GM13976 (cell line): ENCODE measurements at regions of chr11 and their contacts with region 1.

Region 1: GRCh38 chr11:9527481-9528140 is 45.9 kb upstream of the WEE1 start:
- DNase-seq: no peak
- CTCF ChIP-seq: no peak

Region 2: GRCh38 chr11:9314291-9315036 is 213.1 kb before region 1 on chr11 and contains the start of gene TMEM41B:
- in situ Hi-C with region 1: no loop called
- DNase-seq: peak; percentile 100
- CTCF ChIP-seq: no peak

Region 3: GRCh38 chr11:9601037-9601875 is 73.6 kb after region 1 on chr11:
- in situ Hi-C with region 1: loop called (anchors 10 kb)
- DNase-seq: peak; percentile 73
- CTCF ChIP-seq: no peak

Region 4: GRCh38 chr11:9895006-9895405 is 367.4 kb after region 1 on chr11:
- in situ Hi-C with region 1: no loop called
- DNase-seq: no peak
- CTCF ChIP-seq: no peak